OCI-LY7 (cell line): ENCODE measurements at regions of chr13 and their contacts with region 1.

Region 1: DNA sequence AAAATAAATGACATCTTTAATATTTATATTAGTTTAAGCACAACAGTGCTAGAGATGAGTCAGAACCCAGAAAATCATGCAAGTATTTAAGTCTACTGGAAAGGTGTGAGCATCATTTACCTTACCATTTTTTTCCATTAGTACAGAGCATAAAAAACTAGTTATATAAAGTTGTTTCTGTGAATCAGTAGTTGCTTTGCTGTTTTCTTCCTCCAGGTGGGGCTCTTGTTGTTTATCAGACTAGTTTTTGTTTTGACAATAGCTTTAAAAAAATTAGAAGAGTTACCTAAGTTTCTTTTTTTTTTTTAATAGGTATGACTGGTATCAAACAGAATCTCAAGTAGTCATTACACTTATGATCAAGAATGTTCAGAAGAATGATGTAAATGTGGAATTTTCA is 12.7 kb downstream of the SUGT1 start:
- DNase-seq: peak; percentile 20
- H3K4me3 ChIP-seq: no peak overlapping the region
- H3K27ac ChIP-seq: no peak overlapping the region
- H3K4me1 ChIP-seq: no peaks in the 10 kb centered on the region
- CTCF ChIP-seq: peak; percentile 80

Region 2: DNA sequence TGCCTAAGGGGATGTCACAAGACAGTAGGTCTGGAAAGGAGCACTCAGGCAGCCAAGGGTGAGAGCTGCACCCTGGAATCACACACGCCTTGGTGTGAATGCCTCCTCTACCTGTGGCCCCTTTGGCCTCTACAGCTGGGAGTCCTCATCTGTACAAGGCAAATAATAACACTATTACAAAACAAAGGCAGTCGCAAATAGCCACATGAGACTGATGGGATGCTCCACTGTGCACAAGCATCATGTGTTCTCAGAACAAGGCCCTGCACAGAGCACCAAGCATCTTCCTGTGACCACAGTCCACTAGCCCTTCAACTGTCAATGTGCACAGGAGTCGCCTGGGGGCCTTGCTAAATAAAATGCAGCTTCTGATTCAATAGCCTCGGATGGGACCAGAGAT is 67.6 kb before region 1 on chr13:
- CTCF ChIA-PET with region 1: no interaction called
- POLR2A ChIA-PET with region 1: no interaction called
- intact Hi-C with region 1: no loop called
- DNase-seq: no peak
- H3K4me3 ChIP-seq: no peak overlapping the region
- H3K27ac ChIP-seq: no peak overlapping the region
- H3K4me1 ChIP-seq: no peaks in the 10 kb centered on the region
- CTCF ChIP-seq: no peak

Region 3: DNA sequence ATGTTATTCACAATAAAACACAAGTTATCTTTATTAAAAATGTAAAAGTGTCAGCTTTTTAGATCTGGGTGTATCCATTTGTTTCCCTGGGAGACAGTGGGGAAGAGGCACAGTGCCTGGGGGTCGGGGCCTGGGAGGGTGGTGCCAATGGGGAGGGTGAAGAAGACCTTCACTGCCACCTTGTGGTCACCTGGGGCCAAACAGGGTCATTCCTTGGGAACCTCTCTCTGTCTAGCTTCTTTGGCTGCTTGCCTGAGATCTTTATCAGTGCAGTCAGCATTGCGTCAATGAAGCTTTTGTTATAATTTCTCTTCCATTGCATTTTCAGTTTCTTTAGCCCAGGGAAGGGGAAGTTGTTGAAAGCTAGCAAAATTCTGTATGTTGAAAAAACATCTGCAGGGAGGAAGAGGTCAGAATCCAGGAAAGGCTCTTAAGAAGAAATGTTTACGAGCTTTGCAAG is 144.0 kb after region 1 on chr13:
- CTCF ChIA-PET with region 1: no interaction called
- POLR2A ChIA-PET with region 1: no interaction called
- intact Hi-C with region 1: loop called (anchors 5 kb)
- DNase-seq: peak; percentile 60
- H3K4me3 ChIP-seq: no peak overlapping the region
- H3K27ac ChIP-seq: no peak overlapping the region
- H3K4me1 ChIP-seq: no peaks in the 10 kb centered on the region
- CTCF ChIP-seq: peak; percentile 89

Region 4: DNA sequence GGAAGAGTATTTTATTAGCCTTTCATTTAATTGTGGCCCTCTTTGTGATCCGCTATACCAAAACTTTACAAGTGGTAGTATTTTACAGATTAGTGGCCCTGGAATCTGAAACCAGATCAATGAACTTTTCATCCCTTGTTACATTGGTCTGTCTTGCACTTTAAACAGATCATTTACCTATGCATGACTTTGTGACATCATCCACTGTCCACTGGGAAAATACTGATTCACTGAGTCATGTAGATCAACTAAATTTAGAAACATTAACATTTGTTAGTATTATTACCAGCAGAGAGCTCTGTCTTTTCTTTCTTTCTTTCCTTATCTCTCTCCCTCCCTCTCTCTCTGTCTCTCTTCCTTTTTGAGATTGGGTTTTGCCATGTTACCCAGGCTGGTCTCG is 165.6 kb after region 1 on chr13:
- CTCF ChIA-PET with region 1: no interaction called
- POLR2A ChIA-PET with region 1: no interaction called
- intact Hi-C with region 1: no loop called
- DNase-seq: no peak
- H3K4me3 ChIP-seq: no peak overlapping the region
- H3K27ac ChIP-seq: no peak overlapping the region
- H3K4me1 ChIP-seq: no peaks in the 10 kb centered on the region
- CTCF ChIP-seq: no peak